Activated T-helper 1 cell treated with anti-CD3 and anti-CD28 coated beads, Interleukin-12 subunit alpha, Interleukin-12 subunit beta, Interleukin-2, Interleukin-4 antibody, amounts not matched to agents 30 ng/mL and 10 ng/mL and 1 ng/mL, durations not matched to agents 14 hours and 24 hours and 36 hours (primary cell): ENCODE measurements at regions of chr4 and their contacts with region 1.

Region 1: DNA sequence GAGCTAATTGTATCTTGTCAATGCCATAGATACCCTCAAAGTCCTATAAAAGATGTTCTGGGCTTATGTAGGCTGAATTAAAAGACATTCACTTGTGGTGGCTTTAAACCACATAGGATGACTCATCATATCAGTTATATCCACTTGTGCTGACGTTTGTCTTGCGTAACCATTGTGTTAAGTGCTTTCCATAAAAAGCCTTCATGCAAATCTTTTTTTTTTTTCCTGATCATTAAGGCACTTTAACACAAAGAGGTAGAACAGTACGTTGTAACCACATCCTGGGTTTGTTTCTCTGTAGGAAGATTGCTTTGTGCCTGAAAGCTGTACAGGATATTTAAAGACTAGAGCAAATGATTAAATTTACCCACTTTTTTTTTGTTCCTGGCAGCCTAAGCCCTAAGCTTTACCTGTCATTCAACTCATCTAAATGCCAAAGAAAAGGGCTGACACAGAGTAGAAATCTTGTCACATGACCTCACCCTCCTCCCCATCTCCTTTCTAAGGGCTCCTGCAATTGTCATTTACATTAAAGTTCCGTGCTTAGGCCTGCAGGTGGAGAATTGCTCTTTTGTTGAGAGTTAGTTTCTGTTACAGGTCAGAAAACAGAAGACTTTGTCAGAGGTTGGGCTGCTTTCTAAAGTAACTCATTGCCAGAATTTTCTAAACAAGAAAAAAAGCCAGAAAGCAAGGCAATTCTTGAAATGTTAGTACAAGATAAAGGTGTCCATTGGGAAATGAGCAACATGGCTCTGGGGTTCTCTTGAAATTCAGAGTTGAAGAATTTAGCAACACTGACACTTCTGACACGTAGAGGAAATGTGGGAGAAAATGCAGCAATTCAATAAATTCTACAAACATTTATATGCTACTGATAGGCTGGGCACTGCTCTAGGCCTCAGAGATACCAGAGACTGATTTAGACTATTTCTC is 555.6 kb downstream of the PPARGC1A start:
- DNase-seq: peak; percentile 53
- H3K4me3 Mint-ChIP-seq: peak overlapping the region; percentile 65
- H3K27ac Mint-ChIP-seq: peak overlapping the region; percentile 87
- H3K4me1 Mint-ChIP-seq: peaks cover 32% of the 10 kb centered on the region
- H3K27me3 Mint-ChIP-seq: no peaks in the 10 kb centered on the region

Region 2: GRCh38 chr4:23212558-23212957 is 121.7 kb before region 1 on chr4:
- intact Hi-C with region 1: no loop called
- DNase-seq: no peak
- H3K4me3 Mint-ChIP-seq: no peak overlapping the region
- H3K27ac Mint-ChIP-seq: no peak overlapping the region
- H3K4me1 Mint-ChIP-seq: no peaks in the 10 kb centered on the region
- H3K27me3 Mint-ChIP-seq: no peaks in the 10 kb centered on the region

Region 3: GRCh38 chr4:23290656-23291055 is 43.6 kb before region 1 on chr4:
- intact Hi-C with region 1: loop called (anchors 2 kb)
- DNase-seq: no peak
- H3K4me3 Mint-ChIP-seq: no peak overlapping the region
- H3K27ac Mint-ChIP-seq: no peak overlapping the region
- H3K4me1 Mint-ChIP-seq: peaks cover 17% of the 10 kb centered on the region
- H3K27me3 Mint-ChIP-seq: peaks cover 5% of the 10 kb centered on the region

Region 4: GRCh38 chr4:23717528-23718248 is 383.5 kb after region 1 on chr4:
- intact Hi-C with region 1: loop called (anchors 1 kb)
- DNase-seq: no peak
- H3K4me3 Mint-ChIP-seq: no peak overlapping the region
- H3K27ac Mint-ChIP-seq: no peak overlapping the region
- H3K4me1 Mint-ChIP-seq: no peaks in the 10 kb centered on the region
- H3K27me3 Mint-ChIP-seq: no peaks in the 10 kb centered on the region

Region 5: GRCh38 chr4:24419181-24420034 is 1085.2 kb after region 1 on chr4:
- intact Hi-C with region 1: loop called (anchors 2 kb)
- DNase-seq: peak; percentile 42
- H3K4me3 Mint-ChIP-seq: no peak overlapping the region
- H3K27ac Mint-ChIP-seq: no peak overlapping the region
- H3K4me1 Mint-ChIP-seq: no peaks in the 10 kb centered on the region
- H3K27me3 Mint-ChIP-seq: peaks cover 4% of the 10 kb centered on the region

Region 6: DNA sequence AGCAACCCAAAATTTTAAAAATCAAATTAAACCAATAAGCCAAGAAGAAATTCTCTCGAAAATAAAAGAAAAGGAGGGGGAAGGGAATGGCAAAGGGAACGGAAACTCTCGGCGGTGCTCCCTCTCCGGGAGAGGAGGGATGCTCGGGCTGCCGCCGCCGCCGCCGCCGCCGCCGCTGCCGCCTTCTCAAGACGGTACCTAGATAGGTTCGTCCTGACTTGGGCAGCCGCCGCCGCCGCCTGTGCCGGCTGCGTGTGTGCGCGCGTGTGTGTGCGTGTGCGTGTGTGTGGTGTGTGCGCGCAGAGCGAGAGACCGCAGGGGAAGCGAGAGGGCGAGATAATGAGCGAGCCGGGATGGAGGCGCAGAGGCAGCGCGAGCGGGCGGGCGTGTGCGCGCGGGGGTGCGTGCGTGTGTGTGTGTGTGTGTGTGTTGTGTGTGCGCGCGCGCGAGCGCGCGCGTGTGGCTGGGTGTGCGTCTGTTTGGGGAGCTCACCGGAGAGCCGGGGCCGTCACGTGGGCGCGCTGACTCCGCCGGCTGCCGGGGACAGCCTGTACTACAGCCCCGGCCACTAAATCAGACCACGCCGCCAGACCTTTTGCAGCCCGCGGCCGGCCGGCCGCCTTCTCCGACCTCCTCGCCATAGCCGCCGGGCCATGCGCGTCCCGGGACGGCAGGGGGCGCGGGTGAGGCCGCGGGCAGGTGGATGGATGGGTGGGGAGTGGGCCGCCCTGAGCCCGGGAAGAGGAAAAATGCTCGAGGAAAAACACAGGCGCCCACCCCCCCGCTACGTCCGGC is 1138.5 kb after region 1 on chr4:
- intact Hi-C with region 1: loop called (anchors 1 kb)
- DNase-seq: peak; percentile 43
- H3K4me3 Mint-ChIP-seq: peak overlapping the region; percentile 92
- H3K27ac Mint-ChIP-seq: peak overlapping the region; percentile 92
- H3K4me1 Mint-ChIP-seq: peaks cover 47% of the 10 kb centered on the region
- H3K27me3 Mint-ChIP-seq: peaks cover 62% of the 10 kb centered on the region